Dorsolateral prefrontal cortex (tissue), 120 donors: ENCODE measurements at regions of chr6 and their contacts with region 1.

Region 1: GRCh38 chr6:75208298-75209183 is 2.7 kb upstream of the COL12A1 start:
- DNase-seq: peak; percentile 71 to 90 (median 84)
- H3K4me3 ChIP-seq: peak overlapping the region in 58 of 59 donors; percentile 6 to 68 (median 41)
- H3K27ac ChIP-seq: no peak overlapping the region
- H3K27me3 ChIP-seq: peaks cover 0 to 65% (median 36%) of the 10 kb centered on the region in 45 donors
- CTCF ChIP-seq: peak; percentile 74 to 99 (median 92)

Region 2: GRCh38 chr6:73739096-73739495 is 1469.4 kb before region 1 on chr6:
- intact Hi-C with region 1: loop called (anchors 1 to 2 kb)
- DNase-seq: no peak
- H3K4me3 ChIP-seq: no peak overlapping the region
- H3K27ac ChIP-seq: no peak overlapping the region
- H3K27me3 ChIP-seq: no peaks in the 10 kb centered on the region
- CTCF ChIP-seq: peak; percentile 74 to 98 (median 88)

Region 3: DNA sequence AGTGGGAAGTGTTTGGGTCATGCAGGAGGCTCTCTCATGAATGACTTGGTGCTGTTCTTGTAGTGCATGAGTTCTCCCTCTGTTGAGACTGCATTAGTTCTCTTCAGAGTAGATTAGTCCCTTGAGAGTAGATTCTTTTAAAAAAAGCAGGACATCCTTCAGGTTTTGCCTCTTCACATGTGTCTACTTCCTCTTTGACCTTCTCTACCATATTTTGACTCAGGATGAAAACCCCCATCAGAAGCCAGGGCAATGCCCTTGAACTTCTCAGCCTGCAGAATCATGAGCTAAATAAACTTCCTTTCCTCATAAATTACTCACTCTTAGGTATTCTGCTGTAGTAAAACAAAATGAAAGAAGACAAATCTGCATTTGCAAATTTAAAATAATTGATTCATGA is 1342.2 kb before region 1 on chr6:
- intact Hi-C with region 1: loop called in 1 of 2 experiments (anchors 10 kb)
- DNase-seq: no peak
- H3K4me3 ChIP-seq: no peak overlapping the region
- H3K27ac ChIP-seq: no peak overlapping the region
- H3K27me3 ChIP-seq: no peaks in the 10 kb centered on the region
- CTCF ChIP-seq: no peak

Region 4: DNA sequence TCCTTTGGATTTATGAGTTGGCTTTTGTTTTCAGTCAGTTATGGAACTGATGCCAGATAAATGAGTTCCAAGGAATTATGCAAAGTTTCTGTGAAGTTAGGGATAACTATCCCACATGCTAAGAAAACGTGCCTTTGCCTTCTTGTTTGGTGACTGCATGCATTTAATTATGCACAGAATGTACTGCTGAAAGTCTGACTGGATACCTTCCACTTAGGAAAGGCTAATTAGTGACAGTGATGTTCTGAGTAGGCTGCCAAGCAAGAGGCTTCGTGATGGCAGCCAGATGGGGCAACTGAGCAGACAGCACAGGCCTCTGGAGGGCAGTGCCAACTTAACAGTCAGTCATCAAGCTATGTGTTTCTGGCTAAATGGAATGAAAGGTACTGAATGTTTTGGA is 1222.7 kb before region 1 on chr6:
- intact Hi-C with region 1: loop called in 1 of 2 experiments (anchors 10 kb)
- DNase-seq: peak in 3 of 10 donors; percentile 12 to 58 (median 24)
- H3K4me3 ChIP-seq: no peak overlapping the region
- H3K27ac ChIP-seq: no peak overlapping the region
- H3K27me3 ChIP-seq: peaks cover 0 to 3% (median 0%) of the 10 kb centered on the region in 45 donors
- CTCF ChIP-seq: peak in 23 of 56 donors; percentile 8 to 43 (median 26)

Region 5: DNA sequence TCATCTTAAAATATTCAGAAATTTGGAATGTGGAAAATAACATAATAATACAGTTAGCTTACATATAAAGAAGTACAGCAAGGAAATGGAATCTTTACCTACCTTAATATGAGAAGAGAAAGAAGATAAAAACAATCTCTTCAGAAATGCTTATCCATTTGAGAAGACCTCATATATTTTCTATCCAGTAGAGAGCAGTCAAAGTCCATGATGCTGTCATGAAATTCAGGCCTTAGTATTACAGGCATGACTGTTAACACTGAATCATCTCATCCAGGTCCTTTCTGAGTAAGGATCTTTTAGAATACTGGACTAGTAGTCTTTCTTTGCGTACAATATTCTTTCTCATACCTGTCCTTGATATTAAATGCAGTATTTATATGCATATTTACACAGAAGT is 799.1 kb before region 1 on chr6:
- intact Hi-C with region 1: loop called (anchors 5 to 10 kb)
- DNase-seq: no peak
- H3K4me3 ChIP-seq: no peak overlapping the region
- H3K27ac ChIP-seq: no peak overlapping the region
- H3K27me3 ChIP-seq: no peaks in the 10 kb centered on the region
- CTCF ChIP-seq: peak in 48 of 56 donors; percentile 13 to 68 (median 42)

Region 6: DNA sequence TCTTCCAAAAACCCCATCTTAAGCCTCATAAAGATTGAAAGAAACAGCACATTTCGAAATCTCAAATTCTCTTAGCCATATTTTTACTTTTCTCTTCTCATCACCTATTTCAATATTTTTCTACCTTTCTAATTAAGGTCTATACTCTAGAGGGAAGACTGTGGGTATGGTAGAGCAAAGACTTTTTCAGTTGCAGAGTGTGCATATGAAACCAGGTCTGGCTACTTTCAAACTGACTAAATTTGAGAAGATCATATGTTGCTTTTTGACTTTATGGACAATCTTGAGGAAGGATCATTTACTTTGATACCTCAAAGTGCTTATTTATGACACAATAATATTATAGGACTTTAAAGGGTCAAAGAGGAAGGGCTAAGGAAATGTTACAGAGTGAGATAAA is 264.3 kb after region 1 on chr6:
- intact Hi-C with region 1: no loop called
- DNase-seq: no peak
- H3K4me3 ChIP-seq: no peak overlapping the region
- H3K27ac ChIP-seq: no peak overlapping the region
- H3K27me3 ChIP-seq: peaks cover 0 to 3% (median 0%) of the 10 kb centered on the region in 45 donors
- CTCF ChIP-seq: no peak

Region 7: GRCh38 chr6:75588947-75589346 is 380.4 kb after region 1 on chr6:
- intact Hi-C with region 1: no loop called
- DNase-seq: no peak
- H3K4me3 ChIP-seq: no peak overlapping the region
- H3K27ac ChIP-seq: no peak overlapping the region
- H3K27me3 ChIP-seq: no peaks in the 10 kb centered on the region
- CTCF ChIP-seq: no peak